Adrenal gland (tissue), 19 donors: ENCODE measurements at regions of chr5 and their contacts with region 1.

Region 1: GRCh38 chr5:131277875-131278740 is 14.3 kb downstream of the CDC42SE2 start:
- DNase-seq: no peak
- H3K4me3 ChIP-seq: no peak overlapping the region
- H3K27ac ChIP-seq: peak overlapping the region in 1 of 5 donors; percentile 14
- H3K4me1 ChIP-seq: peaks cover 0 to 31% of the 10 kb centered on the region in 2 donors
- H3K27me3 ChIP-seq: no peaks in the 10 kb centered on the region
- CTCF ChIP-seq: no peak
- POLR2A ChIP-seq: no peak

Region 2: GRCh38 chr5:131328536-131329285 is 50.6 kb after region 1 on chr5:
- intact Hi-C with region 1: loop called in 1 of 2 experiments (anchors 10 kb)
- DNase-seq: no peak
- H3K4me3 ChIP-seq: no peak overlapping the region
- H3K27ac ChIP-seq: no peak overlapping the region
- H3K4me1 ChIP-seq: peaks cover 0 to 16% of the 10 kb centered on the region in 2 donors
- H3K27me3 ChIP-seq: no peaks in the 10 kb centered on the region
- CTCF ChIP-seq: no peak
- POLR2A ChIP-seq: no peak

Region 3: GRCh38 chr5:131899692-131900091 is 621.6 kb after region 1 on chr5:
- intact Hi-C with region 1: no loop called
- DNase-seq: no peak
- H3K4me3 ChIP-seq: no peak overlapping the region
- H3K27ac ChIP-seq: no peak overlapping the region
- H3K4me1 ChIP-seq: no peaks in the 10 kb centered on the region
- H3K27me3 ChIP-seq: no peaks in the 10 kb centered on the region
- CTCF ChIP-seq: no peak
- POLR2A ChIP-seq: no peak

Region 4: DNA sequence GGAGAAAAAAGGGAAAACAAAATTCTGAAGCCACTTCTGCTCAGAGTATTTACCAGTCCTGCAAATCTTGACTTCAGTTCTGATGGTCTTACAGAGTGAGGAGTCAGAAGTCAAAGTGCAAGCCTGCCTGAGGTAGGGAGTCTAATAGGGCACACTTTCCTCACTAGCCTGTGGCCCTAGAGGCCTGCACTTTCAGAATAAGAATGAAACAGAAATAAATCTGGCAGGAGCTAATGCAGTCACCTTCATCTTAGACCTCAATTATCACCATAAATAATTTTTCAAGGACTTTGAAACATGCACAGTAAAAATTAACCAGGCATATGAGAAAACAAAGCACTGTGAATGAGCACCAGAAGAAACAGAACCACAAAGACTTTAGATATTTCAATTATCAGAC is 754.1 kb after region 1 on chr5:
- intact Hi-C with region 1: no loop called
- DNase-seq: no peak
- H3K4me3 ChIP-seq: no peak overlapping the region
- H3K27ac ChIP-seq: no peak overlapping the region
- H3K4me1 ChIP-seq: no peaks in the 10 kb centered on the region
- H3K27me3 ChIP-seq: no peaks in the 10 kb centered on the region
- CTCF ChIP-seq: no peak
- POLR2A ChIP-seq: no peak